ENCODE measurements at regions of chr3 and their contacts with region 1.

Region 1: DNA sequence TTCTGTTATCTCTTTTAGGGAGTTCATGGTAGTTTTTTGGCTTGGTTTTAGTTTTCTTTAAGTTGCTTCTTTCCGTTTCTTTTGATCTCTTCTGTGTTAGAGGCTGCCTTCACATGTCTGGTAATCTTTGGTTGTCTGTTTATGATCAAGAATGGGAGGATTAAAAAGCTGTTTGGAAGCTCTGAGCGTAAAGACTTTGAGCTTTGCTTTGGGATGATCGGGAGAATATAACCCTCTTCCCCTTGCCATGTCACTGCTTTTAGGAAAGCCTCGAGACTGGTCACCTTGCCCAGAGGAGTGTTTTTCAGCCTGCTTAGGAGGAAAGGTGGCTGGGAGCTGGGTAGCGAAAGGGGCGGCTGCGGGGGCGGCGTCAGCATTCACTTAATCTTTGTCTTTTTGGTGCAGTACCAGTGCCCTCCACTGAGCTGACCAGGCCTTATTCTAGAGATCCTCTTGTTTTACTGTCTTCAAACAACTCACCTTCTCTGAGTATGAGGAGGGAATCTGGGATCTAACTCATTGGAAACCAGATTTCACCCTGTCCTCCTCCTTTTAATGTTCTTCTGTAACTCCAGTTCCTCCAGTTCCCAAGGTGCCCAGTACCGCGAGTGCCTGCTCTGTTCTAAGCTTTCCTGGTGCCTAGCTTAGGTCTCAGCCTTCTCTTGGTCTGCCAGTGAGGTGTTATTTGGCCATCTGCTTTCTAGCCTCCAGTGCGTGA is 15.5 kb downstream of the TATDN2 start:
- DNase-seq: no peak
- CTCF ChIP-seq: peak; percentile 16

Region 2: GRCh38 chr3:10253731-10254130 is 10.1 kb before region 1 on chr3:
- CTCF ChIA-PET with region 1: interaction called, 11 read pairs
- POLR2A ChIA-PET with region 1: interaction called, 4 read pairs
- DNase-seq: no peak
- CTCF ChIP-seq: no peak

Region 3: DNA sequence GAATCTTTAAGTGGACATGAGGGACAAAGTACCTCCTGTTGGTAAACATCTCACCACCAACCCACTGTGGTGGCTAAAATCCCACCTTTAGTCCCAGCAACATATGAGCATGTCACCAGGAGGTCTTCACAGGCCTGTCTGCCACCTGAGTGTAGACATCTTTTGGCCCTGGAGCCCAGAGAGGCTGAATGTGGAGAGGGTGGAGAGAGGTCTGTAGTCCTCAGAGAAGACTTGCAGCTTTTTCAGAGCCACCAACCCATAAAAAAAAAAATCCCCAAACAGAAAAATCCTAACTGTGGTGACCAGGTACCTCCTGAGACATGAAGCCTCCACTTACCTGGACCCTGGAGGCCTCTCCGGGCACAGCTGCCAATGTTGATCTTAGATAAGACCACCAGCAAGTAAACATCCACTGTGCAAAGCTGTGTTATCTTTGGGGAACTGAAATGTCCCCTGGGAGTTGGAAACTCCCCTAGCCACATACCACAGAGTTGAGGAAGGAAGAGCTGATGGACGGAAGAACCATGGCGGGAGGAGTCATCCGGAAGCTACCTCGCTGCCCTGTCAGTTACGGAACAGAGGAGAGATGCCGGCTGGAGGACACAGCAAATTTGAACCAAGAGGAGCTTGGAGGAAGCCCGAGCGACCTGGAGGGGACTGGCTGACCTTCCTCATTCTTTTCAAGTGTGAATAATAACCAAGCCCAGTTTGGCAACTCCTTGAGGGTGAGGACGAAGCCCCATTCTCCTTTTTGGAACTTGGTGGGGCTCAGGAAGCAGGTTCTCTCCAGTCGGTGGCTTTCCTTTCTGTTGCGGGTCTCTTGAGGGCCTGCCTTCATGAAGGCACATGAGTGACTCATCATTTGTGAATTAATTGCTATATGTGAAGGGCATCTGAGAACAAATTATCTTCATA is 29.0 kb after region 1 on chr3 and contains the start of gene GHRL:
- CTCF ChIA-PET with region 1: interaction called, 11 read pairs
- POLR2A ChIA-PET with region 1: no interaction called
- DNase-seq: peak; percentile 74
- CTCF ChIP-seq: no peak